Left ventricle myocardium inferior (tissue), 1 donor: ENCODE measurements at regions of chr11 and their contacts with region 1.

Region 1: GRCh38 chr11:62694455-62695167 is 5.3 kb upstream of the LRRN4CL start:
- DNase-seq: peak; percentile 70
- H3K4me3 ChIP-seq: no peak overlapping the region
- H3K27ac ChIP-seq: peak overlapping the region; percentile 31
- H3K4me1 ChIP-seq: peaks cover 24% of the 10 kb centered on the region
- H3K27me3 ChIP-seq: no peaks in the 10 kb centered on the region
- CTCF ChIP-seq: peak; percentile 86

Region 2: DNA sequence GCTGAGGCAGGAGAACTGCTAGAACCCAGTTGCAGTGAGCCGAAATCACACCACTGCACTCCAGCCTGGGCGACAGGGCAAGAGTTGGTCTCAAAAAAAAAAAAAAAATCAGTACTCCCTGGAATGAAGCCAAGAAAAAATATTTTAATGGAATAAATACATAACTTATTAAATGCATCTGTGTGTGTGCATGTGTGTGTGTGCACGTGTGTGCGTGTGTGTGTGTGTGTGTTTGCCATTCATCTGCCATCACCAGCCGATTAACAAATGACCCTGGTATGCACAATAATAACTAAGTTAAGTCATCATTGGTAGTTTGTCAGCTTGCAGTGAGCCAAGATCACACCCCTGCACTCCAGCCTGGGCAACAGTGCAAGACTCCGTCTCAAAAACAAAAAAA is 310.8 kb before region 1 on chr11:
- intact Hi-C with region 1: loop called (anchors 10 kb)
- DNase-seq: no peak
- H3K4me3 ChIP-seq: no peak overlapping the region
- H3K27ac ChIP-seq: no peak overlapping the region
- H3K4me1 ChIP-seq: peaks cover 7% of the 10 kb centered on the region
- H3K27me3 ChIP-seq: no peaks in the 10 kb centered on the region
- CTCF ChIP-seq: no peak

Region 3: DNA sequence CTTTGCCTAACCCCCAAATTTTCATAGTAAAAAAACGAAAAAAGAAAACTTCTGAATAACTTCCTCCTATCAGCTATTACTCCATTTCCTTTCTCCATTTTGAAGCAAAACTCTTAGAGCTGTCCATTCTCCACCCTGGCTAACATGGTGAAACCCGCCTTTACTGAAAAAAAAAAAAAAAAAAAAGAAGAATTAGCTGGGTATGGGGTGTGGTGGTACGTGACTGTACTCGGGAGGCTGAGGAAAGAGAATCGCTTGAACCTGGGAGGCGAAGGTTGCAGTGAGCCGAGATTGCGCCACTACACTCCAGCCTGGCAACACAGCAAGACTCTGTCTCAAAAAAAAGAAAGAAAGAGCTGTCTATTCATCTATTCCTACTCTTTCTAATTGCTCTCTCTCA is 121.9 kb after region 1 on chr11:
- intact Hi-C with region 1: no loop called
- DNase-seq: no peak
- H3K4me3 ChIP-seq: no peak overlapping the region
- H3K27ac ChIP-seq: peak overlapping the region; percentile 11
- H3K4me1 ChIP-seq: no peaks in the 10 kb centered on the region
- H3K27me3 ChIP-seq: no peaks in the 10 kb centered on the region
- CTCF ChIP-seq: no peak